GM10248 (cell line): ENCODE measurements at regions of chr11 and their contacts with region 1.

Region 1: DNA sequence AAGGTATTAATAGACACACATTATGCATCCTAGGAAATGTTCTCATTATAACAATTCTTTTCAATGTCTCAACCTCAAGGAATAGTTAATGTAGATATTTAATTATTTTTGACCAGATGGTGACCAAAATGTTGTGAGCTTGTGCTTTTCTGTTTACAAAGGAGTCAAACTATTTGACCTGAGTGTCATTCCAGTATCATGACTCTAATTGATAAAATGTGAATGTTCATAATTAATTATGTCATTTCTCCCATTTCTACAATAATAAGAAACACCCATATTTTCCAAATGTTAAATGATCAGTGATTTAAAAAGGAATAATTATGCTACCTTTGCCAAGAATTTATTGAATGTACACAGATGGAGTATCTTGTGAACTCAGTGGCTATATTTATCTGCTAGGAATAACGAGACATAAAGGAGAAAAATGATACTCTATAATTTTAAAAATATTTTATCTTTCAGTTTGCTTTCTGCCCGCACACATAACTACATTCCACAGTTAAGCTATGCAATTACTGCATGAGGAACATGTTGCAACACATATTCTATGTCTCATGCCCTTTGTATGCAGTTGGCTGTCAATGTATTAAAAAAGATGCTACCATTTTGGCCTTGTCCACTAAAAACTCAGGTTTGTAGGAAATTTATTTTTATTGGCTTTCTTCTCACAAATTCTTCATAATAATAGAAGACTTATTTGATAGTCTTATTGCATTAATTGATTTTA is 376.7 kb upstream of the CCDC179 start:
- DNase-seq: no peak
- CTCF ChIP-seq: no peak

Region 2: GRCh38 chr11:23226331-23227077 is 10.5 kb before region 1 on chr11:
- CTCF ChIA-PET with region 1: interaction called, 14 read pairs
- POLR2A ChIA-PET with region 1: no interaction called
- DNase-seq: no peak
- CTCF ChIP-seq: no peak